OCI-LY7 (cell line): ENCODE measurements at regions of chr2 and their contacts with region 1.

Region 1: DNA sequence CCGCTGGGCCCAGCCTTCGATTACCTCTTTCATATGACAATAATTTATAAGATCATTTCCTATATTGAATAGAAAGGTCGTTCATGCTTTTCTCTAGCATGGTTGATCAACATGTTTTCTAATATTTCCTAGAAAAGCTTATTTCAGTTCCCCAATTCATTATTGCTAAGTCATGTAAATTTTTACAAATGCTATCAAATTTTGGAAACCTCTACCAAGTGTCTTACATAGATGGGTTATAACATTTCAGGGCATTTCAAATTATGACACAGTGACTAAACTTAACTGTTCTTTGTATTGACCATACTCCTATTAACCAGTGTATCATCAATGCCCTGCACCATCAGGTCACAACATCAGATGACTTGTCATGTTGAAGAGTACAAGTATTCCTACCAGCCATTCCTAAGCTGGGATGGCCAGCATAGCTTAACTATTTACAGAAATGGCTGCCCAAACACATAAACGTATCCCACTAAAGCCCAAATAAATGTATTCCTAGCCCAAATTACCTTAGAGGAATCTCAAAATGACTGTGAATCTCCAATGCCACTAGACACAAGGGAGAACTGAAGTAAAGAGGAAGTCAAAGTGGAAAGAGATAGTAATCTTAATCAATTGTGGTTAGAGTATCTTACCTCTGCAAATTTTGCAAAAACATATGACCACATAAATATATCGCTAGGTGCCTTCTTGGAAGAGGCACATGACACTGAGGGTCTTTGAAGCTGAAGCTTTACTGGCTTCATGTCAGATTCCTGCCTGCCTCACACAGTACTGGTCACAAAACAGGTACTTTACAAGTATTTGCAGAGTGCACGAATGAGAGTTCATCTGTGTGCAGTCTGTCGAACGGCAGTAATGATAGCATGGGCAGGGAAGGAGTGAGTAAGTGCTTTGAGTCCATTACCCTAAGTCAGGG is 87.3 kb upstream of the TLK1 start:
- DNase-seq: no peak
- H3K4me3 ChIP-seq: no peak overlapping the region
- H3K27ac ChIP-seq: no peak overlapping the region
- H3K4me1 ChIP-seq: peaks cover 6% of the 10 kb centered on the region
- CTCF ChIP-seq: no peak

Region 2: DNA sequence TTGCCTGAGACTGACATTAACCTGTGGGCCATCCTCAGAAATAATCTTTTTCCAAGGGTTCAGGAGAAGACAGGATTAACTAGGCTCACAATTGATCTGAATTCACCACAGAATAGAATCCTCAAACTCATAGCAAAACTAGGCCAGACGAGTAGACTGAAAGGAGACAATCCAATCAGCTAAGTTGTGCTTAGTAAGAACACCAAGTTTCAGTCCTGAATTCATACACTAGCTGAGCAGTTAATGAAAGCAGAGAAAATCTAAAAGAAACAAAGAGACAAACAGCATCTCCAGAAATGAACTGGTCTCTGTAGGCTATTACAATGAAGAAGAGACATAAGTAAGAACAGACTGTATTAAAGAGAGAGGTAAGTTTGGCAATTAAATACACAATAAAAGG is 229.5 kb before region 1 on chr2:
- CTCF ChIA-PET with region 1: no interaction called
- POLR2A ChIA-PET with region 1: no interaction called
- intact Hi-C with region 1: no loop called
- DNase-seq: no peak
- H3K4me3 ChIP-seq: no peak overlapping the region
- H3K27ac ChIP-seq: no peak overlapping the region
- H3K4me1 ChIP-seq: no peaks in the 10 kb centered on the region
- CTCF ChIP-seq: no peak

Region 3: DNA sequence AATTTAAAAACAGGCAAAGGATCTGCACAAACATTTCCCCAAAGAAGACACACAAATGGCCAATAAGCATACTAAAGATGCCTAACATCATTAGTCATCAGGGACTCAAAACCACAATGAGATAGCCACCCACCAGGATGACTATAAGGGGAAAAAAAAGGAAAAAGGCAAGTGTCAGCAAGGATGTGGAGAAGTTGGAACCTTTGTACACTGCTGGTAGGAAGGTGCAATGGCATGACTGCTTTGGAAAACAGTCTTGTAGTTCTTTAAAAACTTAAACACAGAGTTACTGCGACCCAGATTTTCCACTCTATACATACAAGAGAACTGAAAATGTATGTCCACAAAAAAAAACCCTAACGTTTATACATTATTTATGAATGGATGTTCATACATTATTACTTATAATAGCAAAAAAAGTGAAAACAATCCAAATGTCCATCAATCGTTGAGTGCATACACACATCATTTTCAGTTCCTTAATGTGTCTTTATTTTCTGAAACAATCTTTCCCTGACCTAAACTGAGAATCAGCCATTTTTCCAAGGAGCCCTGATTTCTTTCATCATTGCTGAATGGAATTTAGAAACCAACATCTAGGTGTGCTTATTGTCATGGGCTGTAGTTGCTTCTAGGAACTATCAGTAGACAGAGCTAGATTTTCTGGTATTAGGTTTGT is 22.6 kb before region 1 on chr2:
- CTCF ChIA-PET with region 1: no interaction called
- POLR2A ChIA-PET with region 1: interaction called, 13 read pairs
- intact Hi-C with region 1: no loop called
- DNase-seq: no peak
- H3K4me3 ChIP-seq: no peak overlapping the region
- H3K27ac ChIP-seq: no peak overlapping the region
- H3K4me1 ChIP-seq: peaks cover 6% of the 10 kb centered on the region
- CTCF ChIP-seq: no peak

Region 4: GRCh38 chr2:171266102-171266501 is 18.1 kb after region 1 on chr2:
- CTCF ChIA-PET with region 1: no interaction called
- POLR2A ChIA-PET with region 1: interaction called, 10 read pairs
- intact Hi-C with region 1: no loop called
- DNase-seq: peak; percentile 42
- H3K4me3 ChIP-seq: no peak overlapping the region
- H3K27ac ChIP-seq: peak overlapping the region; percentile 19
- H3K4me1 ChIP-seq: peaks cover 28% of the 10 kb centered on the region
- CTCF ChIP-seq: no peak